ENCODE measurements at regions of chr12 and their contacts with region 1.

Region 1: DNA sequence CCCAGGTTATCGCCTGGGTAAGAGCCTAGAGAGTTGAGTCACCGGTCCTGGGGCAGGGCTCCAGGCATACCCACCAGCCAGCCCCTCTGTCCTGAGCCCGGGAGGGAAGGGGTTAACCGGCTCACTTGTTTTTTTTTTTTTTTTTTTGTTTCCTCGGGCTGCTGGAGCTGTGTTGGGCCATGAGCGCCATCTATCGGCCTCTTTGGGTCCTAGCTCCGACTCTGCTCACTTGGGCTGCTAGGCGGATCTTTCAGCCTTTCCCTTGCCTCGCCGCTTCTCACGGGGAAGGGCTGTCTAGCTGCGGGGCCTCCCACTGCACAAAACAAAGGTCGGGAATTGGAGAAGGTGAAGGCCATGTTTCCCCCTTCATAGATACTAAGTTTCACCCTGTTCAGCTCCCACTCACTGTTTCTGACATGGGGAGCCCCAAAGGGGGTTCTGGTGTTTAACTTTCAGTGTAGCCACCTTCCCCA is 2.8 kb upstream of the SMUG1 start:
- DNase-seq: peak; percentile 59 to 85
- ATAC-seq: peak; percentile 63

Region 2: GRCh38 chr12:54005853-54006686 is 185.5 kb before region 1 on chr12:
- intact Hi-C with region 1: loop called (anchors 5 kb)
- DNase-seq: peak; percentile 60 to 90
- ATAC-seq: peak; percentile 87

Region 3: DNA sequence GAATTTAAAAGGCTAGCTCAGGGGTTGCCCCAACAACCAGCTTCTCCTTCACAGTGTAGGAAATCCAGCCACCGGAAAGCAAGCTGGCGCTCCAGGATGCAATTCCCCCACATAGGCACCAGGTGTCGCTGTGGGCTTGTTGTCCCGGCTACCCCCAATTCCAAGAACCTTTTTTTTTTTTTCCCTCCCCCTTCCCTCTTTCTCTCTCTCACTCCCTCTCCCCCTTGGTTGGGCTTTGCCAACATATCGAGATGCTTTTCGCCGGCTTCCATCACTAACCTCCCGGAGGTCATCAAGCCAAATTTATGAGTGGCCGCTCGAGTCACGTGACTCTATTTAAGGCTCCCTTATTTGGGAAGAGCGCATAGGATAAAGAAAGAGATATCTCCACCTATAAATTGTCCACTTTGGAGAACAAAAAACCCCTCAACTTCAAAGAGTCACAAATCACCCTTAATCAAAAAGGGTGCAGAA is 158.9 kb before region 1 on chr12 and contains the start of gene HOXC5:
- intact Hi-C with region 1: loop called in 1 of 2 experiments (anchors 5 kb)
- DNase-seq: peak in 1 of 2 donors; percentile 59
- ATAC-seq: peak; percentile 36
- total RNA-seq, gene HOXC5: not detected